ENCODE measurements at regions of chr6 and their contacts with region 1.

Region 1: GRCh38 chr6:6927521-6928371 is 180.0 kb upstream of the RREB1 start:
- DNase-seq: no peak
- ATAC-seq: peak; percentile 57
- H3K4me3 ChIP-seq: peak overlapping the region in 1 of 3 experiments; percentile 45; a peak in 1 of 6 replicates
- H3K27ac ChIP-seq: no peak overlapping the region
- H3K4me1 ChIP-seq: peaks cover 5% of the 10 kb centered on the region; the same call in 1 of the 2 replicates
- H3K27me3 ChIP-seq: peaks cover 0 to 10% of the 10 kb centered on the region in 2 experiments; a peak in 1 of 5 replicates
- CTCF ChIP-seq: peak; percentile 36; the same call in 1 of the 2 replicates
- EP300 ChIP-seq: no peak
- POLR2A ChIP-seq: no peak
- RAD21 ChIP-seq: no peak

Region 2: GRCh38 chr6:6890400-6890858 is 37.3 kb before region 1 on chr6:
- CTCF ChIA-PET with region 1: no interaction called
- POLR2A ChIA-PET with region 1: no interaction called
- in situ Hi-C with region 1: no loop called
- intact Hi-C with region 1: loop called (anchors 1 kb)
- DNase-seq: no peak
- ATAC-seq: peak; percentile 78
- H3K4me3 ChIP-seq: peak overlapping the region in 1 of 3 experiments; percentile 37; a peak in 2 of 6 replicates
- H3K27ac ChIP-seq: no peak overlapping the region
- H3K4me1 ChIP-seq: peaks cover 18% of the 10 kb centered on the region
- H3K27me3 ChIP-seq: 0 out of 5 replicates have a peak, but pooled peaks cover 0 to 6% of the 10 kb centered on the region in 2 experiments
- CTCF ChIP-seq: no peak
- EP300 ChIP-seq: no peak
- POLR2A ChIP-seq: no peak
- RAD21 ChIP-seq: no peak

Region 3: DNA sequence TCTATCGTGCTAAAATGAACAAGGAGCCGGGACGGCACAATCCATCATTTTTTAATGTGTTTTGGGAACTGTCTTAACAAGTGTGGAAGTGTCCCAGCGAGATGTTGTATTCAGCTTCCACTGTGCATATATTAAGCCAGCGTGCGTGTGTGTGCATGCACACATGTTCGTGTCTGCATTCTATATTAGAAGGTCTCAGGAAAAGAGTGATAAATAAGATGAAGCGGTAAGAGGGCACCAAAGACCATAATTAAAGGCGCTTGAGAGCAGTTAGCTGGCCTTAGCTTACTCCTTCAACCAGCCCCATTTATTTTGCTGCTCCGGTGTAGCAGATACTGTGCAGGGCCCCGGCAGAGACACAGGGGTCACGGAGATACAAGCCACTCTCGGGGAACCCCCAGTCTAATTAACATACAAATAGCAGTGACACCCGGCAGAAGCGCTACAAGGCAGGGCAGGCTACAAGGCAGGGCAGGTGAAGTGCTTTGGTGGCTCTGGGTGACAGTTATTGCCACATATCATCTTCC is 26.5 kb before region 1 on chr6:
- CTCF ChIA-PET with region 1: no interaction called
- POLR2A ChIA-PET with region 1: no interaction called
- in situ Hi-C with region 1: no loop called
- intact Hi-C with region 1: no loop called
- DNase-seq: no peak
- ATAC-seq: no peak
- H3K4me3 ChIP-seq: no peak overlapping the region
- H3K27ac ChIP-seq: no peak overlapping the region
- H3K4me1 ChIP-seq: peaks cover 10% of the 10 kb centered on the region; the same call in 1 of the 2 replicates
- H3K27me3 ChIP-seq: peaks cover 0 to 5% of the 10 kb centered on the region in 2 experiments; a peak in 2 of 5 replicates
- CTCF ChIP-seq: no peak
- EP300 ChIP-seq: no peak
- POLR2A ChIP-seq: no peak
- RAD21 ChIP-seq: no peak